ENCODE measurements at regions of chr3 and their contacts with region 1.

Region 1: DNA sequence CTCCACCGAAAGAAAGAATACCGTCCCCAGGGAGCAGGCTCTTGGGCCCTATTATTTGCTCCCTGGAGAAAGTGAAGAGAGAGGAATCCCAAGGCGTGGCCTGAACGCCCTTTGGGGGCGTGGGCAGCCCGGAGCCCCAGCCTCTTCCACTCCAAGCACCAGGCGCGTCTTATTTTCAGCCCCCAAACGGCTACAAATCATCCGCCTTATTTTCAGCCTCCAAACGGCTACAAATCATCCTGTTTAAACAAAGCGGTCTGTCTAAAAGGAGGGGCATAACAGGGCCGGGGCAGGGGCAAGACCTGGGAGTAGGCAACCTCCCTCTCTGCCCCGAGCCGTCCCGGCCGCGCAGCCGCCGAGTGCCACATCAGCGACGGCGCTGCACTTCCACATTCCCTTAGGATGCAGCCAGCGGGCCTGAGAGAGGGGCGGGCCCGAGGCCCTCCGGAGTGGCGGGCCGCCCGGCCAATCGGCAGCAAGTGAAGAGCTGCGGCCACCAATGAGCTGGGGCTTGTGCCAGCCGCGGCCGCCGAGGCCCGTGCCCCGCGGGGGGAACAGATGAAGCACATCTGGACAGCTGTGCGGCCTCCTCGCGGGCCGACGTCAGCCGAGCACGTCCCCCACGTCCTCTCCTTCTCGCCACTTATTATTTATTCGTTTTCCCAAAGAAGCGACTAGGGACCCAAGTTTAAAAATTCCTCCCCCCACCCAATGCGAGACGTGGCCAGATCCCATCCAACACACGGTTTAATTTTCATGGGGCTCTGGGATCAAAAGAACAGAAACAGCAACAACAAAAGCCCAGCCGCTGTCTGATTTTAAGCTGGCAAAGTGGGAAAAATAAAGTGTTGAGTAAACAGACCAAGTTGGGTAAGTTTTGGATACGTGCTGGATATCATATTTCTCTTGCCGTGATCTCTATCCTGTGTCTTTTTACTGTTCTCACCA is at the start of gene TMEM45A:
- DNase-seq: peak; percentile 89 to 100
- H3K4me3 ChIP-seq: peak within 1 kb of the TSS; percentile 79
- H3K27ac ChIP-seq: 0 out of 2 replicates have a peak within 1 kb of the TSS, but pooled peaks have one; percentile 7
- H3K4me1 ChIP-seq: peaks cover 28% of the 10 kb centered on the region
- H3K27me3 ChIP-seq: no peaks in the 10 kb centered on the region
- CTCF ChIP-seq: no peak
- total RNA-seq, gene TMEM45A: 21.6 and 31.1 TPM in 2 replicates

Region 2: DNA sequence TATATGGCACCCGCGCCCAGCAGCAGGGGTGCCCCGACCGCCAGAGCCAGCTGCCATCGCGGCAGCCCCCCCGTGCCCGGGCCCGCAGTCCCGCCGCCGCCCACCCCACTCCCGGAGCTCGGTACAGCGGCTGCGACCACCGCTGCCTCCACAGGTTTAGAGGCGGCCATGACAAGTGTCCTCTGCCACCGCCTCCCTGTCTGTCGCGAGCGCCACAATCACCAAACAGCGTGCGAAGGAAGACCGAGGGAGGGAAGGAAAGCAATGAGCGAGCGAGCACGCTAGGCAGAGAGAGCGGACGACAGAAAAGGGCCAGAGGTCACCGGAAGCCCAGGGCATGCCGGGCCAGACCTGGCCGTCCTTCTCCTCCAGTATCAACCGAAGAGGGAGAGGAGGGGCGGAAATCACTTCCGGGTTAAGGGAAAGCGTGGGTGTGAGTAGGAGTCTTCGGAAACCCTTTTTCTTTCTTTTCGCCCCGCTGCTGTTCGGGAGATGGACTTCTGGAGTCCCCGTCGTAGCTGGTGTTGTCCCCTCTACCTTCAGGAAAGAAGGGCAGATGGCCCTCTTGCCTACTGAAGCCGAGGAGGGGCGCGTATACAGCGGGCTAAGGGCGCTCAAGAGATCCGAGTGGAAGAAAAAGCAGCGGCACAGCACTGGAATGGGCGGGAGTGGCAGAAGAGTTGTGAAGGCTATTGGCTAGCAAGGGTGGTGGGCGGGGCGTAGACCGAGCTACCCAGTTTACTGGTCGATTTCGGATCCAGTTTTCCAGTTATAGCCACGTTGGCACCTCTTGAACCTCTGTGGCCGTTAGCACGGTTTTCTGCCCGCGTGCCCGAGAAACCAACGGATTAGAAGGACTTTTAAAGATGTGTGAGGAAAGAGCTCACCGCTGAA is 91.3 kb before region 1 on chr3 and contains the starts of genes LNP1 and TOMM70:
- CTCF ChIA-PET with region 1: no interaction called
- POLR2A ChIA-PET with region 1: interaction called, 8 read pairs
- intact Hi-C with region 1: loop called (anchors 2 kb)
- DNase-seq: peak; percentile 97 to 98
- H3K4me3 ChIP-seq: peak within 1 kb of the TSS; percentile 83
- H3K27ac ChIP-seq: peak within 1 kb of the TSS; percentile 78
- H3K4me1 ChIP-seq: peaks cover 36% of the 10 kb centered on the region
- H3K27me3 ChIP-seq: no peaks in the 10 kb centered on the region
- CTCF ChIP-seq: no peak
- total RNA-seq, gene LNP1: 4.8 TPM in 2 replicates
- total RNA-seq, gene TOMM70: 63.7 and 65.2 TPM in 2 replicates

Region 3: GRCh38 chr3:100537622-100538338 is 45.4 kb after region 1 on chr3:
- CTCF ChIA-PET with region 1: no interaction called
- POLR2A ChIA-PET with region 1: interaction called, 6 read pairs
- intact Hi-C with region 1: loop called (anchors 1 kb)
- DNase-seq: peak; percentile 33 to 80
- H3K4me3 ChIP-seq: no peak overlapping the region
- H3K27ac ChIP-seq: peak overlapping the region; percentile 47
- H3K4me1 ChIP-seq: peaks cover 47% of the 10 kb centered on the region
- H3K27me3 ChIP-seq: no peaks in the 10 kb centered on the region
- CTCF ChIP-seq: no peak

Region 4: GRCh38 chr3:100621251-100621650 is 128.9 kb after region 1 on chr3:
- CTCF ChIA-PET with region 1: no interaction called
- POLR2A ChIA-PET with region 1: interaction called, 10 read pairs
- intact Hi-C with region 1: no loop called
- DNase-seq: no peak
- H3K4me3 ChIP-seq: no peak overlapping the region
- H3K27ac ChIP-seq: no peak overlapping the region
- H3K4me1 ChIP-seq: no peaks in the 10 kb centered on the region
- H3K27me3 ChIP-seq: no peaks in the 10 kb centered on the region
- CTCF ChIP-seq: no peak

Region 5: GRCh38 chr3:100697172-100697571 is 204.8 kb after region 1 on chr3:
- CTCF ChIA-PET with region 1: no interaction called
- POLR2A ChIA-PET with region 1: no interaction called
- intact Hi-C with region 1: no loop called
- DNase-seq: no peak
- H3K4me3 ChIP-seq: no peak overlapping the region
- H3K27ac ChIP-seq: no peak overlapping the region
- H3K4me1 ChIP-seq: peaks cover 6% of the 10 kb centered on the region; the same call in 1 of the 2 replicates
- H3K27me3 ChIP-seq: no peaks in the 10 kb centered on the region
- CTCF ChIP-seq: no peak

Region 6: DNA sequence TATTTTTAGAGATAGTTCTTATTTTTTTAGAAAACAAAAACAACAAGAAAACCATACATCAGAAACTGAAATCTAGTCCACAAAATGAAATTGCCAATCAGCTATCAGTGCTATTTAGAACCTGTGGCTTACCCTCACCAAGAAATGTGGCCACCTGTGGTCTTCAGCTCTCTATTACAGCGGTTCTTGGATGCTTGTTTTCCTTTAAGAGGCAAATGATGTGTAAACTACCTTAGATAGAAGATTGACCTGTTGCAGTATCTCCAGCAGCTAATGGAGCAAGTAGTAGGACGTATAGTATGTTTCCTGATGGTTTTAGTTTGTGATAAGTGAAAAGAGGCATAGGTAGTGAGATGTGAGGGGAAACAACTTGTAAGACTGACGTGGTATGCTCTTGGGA is 238.2 kb after region 1 on chr3:
- CTCF ChIA-PET with region 1: no interaction called
- POLR2A ChIA-PET with region 1: no interaction called
- intact Hi-C with region 1: no loop called
- DNase-seq: no peak
- H3K4me3 ChIP-seq: no peak overlapping the region
- H3K27ac ChIP-seq: no peak overlapping the region
- H3K4me1 ChIP-seq: no peaks in the 10 kb centered on the region
- H3K27me3 ChIP-seq: no peaks in the 10 kb centered on the region
- CTCF ChIP-seq: no peak

Region 7: DNA sequence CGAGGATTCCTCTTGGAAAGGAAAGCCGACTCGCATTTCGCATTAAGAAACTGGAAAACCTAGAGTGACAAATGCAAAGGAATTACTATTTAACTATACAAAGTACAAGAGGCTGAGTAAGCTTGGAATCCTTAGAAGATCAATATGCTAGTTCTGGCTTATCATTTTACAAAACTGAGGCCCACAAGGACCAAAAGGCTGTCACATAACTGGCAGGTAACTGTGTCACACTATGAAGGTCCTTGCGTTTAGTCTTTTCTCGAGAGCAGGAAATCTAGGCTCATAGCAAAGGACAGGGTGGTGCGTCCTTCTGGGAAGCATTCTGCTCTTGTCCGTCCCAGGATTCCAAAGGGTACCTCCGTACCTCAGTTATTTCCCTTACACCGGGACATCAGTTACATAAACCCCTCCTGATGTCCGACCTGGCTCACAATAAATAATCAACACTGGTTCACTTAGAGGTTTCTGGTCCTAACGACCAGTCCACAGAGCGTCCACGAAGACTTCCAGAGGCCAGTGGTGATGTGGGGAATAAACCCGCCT is 1193.6 kb after region 1 on chr3:
- CTCF ChIA-PET with region 1: no interaction called
- POLR2A ChIA-PET with region 1: no interaction called
- intact Hi-C with region 1: loop called (anchors 10 kb)
- DNase-seq: no peak
- H3K4me3 ChIP-seq: peak overlapping the region; percentile 78
- H3K27ac ChIP-seq: peak overlapping the region; percentile 89
- H3K4me1 ChIP-seq: peaks cover 42% of the 10 kb centered on the region
- H3K27me3 ChIP-seq: no peaks in the 10 kb centered on the region
- CTCF ChIP-seq: no peak